ENCODE measurements at regions of chr1 and their contacts with region 1.

Region 1: DNA sequence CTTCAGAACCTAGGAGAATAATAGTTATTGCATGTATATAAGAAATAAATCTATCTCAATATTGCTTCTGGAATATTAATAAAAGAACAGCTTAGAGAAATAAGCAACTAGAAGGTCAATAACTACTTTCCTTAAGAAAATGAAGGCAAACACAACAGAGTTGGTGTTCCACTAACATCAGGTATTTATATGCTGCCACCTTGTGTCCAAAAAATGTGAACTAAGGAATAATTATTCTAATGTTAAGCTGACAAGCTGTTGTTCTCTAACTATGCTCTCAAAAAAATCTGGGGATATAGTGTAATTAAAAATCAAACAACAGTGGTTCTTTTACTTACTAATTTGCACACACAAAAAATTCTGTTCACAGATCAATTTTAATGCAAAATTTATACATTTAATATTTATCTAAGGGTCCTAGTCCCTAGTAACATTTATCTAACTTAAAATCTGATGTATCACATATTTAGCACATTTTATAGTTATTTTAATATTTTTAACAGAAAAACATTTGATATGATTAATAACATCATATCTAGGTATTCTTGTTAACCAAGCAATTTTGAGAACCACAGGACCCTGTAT is 39.6 kb downstream of the UCHL5 start:
- DNase-seq: no peak
- H3K4me3 ChIP-seq: peak overlapping the region in 3 of 4 donors; percentile 3 to 11 (median 3)
- H3K27ac ChIP-seq: peak overlapping the region in 3 of 4 donors; percentile 20 to 53 (median 41)
- H3K4me1 ChIP-seq: peaks cover 3 to 36% (median 19%) of the 10 kb centered on the region in 4 donors
- H3K27me3 ChIP-seq: no peaks in the 10 kb centered on the region
- CTCF ChIP-seq: peak; percentile 58 to 75 (median 66)
- EP300 ChIP-seq: no peak
- POLR2A ChIP-seq: no peak

Region 2: GRCh38 chr1:192913683-192914082 is 105.9 kb before region 1 on chr1:
- intact Hi-C with region 1: loop called (anchors 10 kb)
- DNase-seq: no peak
- H3K4me3 ChIP-seq: no peak overlapping the region
- H3K27ac ChIP-seq: peak overlapping the region; percentile 60 to 75 (median 72)
- H3K4me1 ChIP-seq: peaks cover 4 to 43% (median 33%) of the 10 kb centered on the region in 4 donors
- H3K27me3 ChIP-seq: no peaks in the 10 kb centered on the region
- CTCF ChIP-seq: no peak
- EP300 ChIP-seq: no peak
- POLR2A ChIP-seq: no peak